AG04450 (cell line): ENCODE measurements at regions of chr3 and their contacts with region 1.

Region 1: GRCh38 chr3:44198284-44199269 is 43.1 kb upstream of the TOPAZ1 start:
- DNase-seq: peak; percentile 26
- H3K4me3 ChIP-seq: no peak overlapping the region
- H3K27ac ChIP-seq: no peak overlapping the region
- H3K27me3 ChIP-seq: peaks cover 2% of the 10 kb centered on the region
- CTCF ChIP-seq: peak; percentile 90

Region 2: GRCh38 chr3:43540624-43541023 is 658.0 kb before region 1 on chr3:
- CTCF ChIA-PET with region 1: interaction called, 16 read pairs
- POLR2A ChIA-PET with region 1: no interaction called
- DNase-seq: no peak
- H3K4me3 ChIP-seq: no peak overlapping the region
- H3K27ac ChIP-seq: no peak overlapping the region
- H3K27me3 ChIP-seq: no peaks in the 10 kb centered on the region
- CTCF ChIP-seq: no peak

Region 3: GRCh38 chr3:43638594-43639447 is 559.8 kb before region 1 on chr3:
- CTCF ChIA-PET with region 1: no interaction called
- POLR2A ChIA-PET with region 1: no interaction called
- DNase-seq: no peak
- H3K4me3 ChIP-seq: no peak overlapping the region
- H3K27ac ChIP-seq: no peak overlapping the region
- H3K27me3 ChIP-seq: no peaks in the 10 kb centered on the region
- CTCF ChIP-seq: 0 out of 2 replicates have a peak, but pooled peaks have one; percentile 3

Region 4: DNA sequence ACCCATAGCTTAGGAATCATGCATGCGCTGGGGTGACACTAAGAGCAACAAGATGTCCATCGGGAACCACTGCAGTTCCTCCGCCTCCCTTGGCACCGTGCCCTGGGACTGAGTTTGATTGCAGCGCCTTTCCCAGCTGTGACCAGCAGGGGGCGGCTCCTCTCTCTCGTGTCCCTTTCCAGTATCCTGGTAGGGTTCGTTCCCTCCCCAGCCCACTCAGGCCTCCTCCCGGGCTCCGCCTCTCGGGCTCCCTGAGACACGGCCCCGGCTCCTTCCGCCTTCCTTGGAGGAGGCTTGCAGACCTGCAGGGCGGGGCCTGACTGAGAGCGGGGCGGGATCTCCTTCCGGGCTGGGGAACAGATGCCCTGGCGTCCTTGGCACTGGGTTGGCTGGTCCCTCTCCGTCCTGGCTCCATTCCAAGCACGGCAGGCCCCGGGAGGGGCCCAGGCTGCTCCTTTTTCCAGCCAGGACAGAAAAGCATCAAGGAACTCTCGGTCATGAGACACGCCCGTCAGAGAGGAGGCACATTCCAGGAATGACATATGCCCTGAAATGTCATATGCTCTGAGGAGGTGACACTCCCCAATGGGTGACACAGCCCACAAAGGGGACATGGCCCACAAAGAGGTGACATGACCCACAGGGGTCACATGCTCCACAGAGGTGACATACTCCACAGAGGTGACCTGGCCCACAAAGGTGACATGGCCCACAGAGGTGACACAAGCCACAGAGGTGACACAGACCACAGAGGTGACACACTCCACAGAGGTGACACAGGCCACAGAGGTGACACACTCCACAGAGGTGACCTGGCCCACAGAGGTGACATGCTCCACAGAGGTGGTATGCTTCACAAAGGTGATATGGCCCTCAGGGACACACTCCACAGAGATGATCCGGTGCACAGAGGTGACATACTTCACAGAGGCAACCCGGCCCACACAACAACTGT is 428.8 kb before region 1 on chr3:
- CTCF ChIA-PET with region 1: interaction called, 11 read pairs
- POLR2A ChIA-PET with region 1: no interaction called
- DNase-seq: peak; percentile 88
- H3K4me3 ChIP-seq: peak overlapping the region; percentile 53
- H3K27ac ChIP-seq: no peak overlapping the region
- H3K27me3 ChIP-seq: no peaks in the 10 kb centered on the region
- CTCF ChIP-seq: peak; percentile 91

Region 5: DNA sequence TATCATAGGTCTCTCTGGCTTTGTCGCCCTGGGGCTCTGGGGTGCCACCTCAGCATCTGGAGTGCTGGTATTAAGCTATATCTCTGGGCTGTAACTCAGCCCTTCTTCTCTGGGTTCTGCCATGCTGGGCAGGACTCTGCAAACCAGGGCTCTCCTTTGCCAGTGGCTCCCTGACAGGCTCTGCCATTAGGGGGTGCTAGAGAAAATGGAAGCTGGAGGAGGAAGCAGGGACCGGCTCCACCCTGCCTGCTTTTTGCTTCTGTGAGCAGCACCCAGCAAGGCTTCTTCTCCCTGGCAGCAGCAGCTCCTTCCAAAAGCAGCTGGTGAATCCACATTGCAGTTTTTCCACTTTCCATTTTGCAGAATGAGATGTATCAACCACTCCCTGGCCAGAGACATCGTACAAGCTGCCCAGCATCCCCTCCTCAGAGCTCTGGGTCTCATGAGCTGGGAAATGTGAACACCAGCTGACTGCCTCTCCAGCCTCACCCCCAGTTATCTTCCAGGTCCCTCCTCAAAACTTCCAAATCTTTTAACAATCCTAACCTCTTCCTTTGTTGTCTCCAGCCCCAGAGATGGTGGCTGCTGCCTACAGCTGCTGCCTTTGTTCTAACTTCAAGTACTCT is 342.8 kb before region 1 on chr3:
- CTCF ChIA-PET with region 1: interaction called, 11 read pairs
- POLR2A ChIA-PET with region 1: no interaction called
- DNase-seq: peak; percentile 24
- H3K4me3 ChIP-seq: no peak overlapping the region
- H3K27ac ChIP-seq: no peak overlapping the region
- H3K27me3 ChIP-seq: no peaks in the 10 kb centered on the region
- CTCF ChIP-seq: peak; percentile 69